Mammary epithelial cell (primary cell): ENCODE measurements at regions of chr14 and their contacts with region 1.

Region 1: GRCh38 chr14:103014466-103015319 is 42.7 kb downstream of the CDC42BPB start:
- DNase-seq: peak; percentile 57
- H3K4me3 ChIP-seq: no peak overlapping the region
- H3K27ac ChIP-seq: no peak overlapping the region
- H3K4me1 ChIP-seq: peaks cover 19% of the 10 kb centered on the region
- H3K27me3 ChIP-seq: no peaks in the 10 kb centered on the region
- CTCF ChIP-seq: no peak

Region 2: DNA sequence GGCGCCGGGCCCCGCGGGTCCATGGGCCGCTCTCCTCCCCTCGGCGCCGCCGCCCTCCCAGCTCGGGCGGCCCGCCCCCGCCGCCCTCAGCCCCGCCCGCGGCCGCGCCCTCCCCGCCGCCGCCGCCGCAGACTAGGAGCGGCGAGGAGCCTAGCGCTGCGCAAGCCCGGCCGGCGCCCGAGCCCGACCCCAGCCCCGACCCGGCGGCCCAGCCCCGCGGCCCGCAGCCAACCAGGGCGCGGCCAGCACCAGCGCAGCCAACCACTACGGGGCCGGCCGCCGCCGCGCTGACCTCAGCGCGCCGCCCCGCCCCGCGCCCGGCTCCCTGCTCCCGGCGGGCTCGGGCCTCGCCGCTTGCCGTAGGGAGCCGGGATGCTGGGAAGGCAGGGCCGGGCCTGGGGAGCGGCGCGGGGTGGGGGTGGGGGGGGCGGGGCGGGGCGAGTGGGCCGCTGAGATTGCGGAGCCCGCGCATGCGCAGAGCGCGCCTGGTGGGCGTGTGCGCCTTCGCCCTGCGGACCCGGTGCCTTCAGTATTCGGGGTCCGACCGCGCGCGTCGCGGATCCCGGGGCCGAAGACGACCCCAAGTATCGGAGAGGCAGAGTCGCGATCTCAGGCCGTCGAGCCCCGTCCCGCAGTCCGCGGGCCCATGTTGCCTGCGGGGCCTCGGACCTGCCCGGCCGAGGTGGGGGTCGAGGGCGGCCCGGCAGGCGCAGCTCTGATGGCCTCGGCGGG is 42.8 kb after region 1 on chr14 and contains the start of gene CDC42BPB:
- CTCF ChIA-PET with region 1: no interaction called
- dilution Hi-C with region 1: no loop called
- in situ Hi-C with region 1: no loop called
- intact Hi-C with region 1: loop called (anchors 2 kb)
- DNase-seq: peak; percentile 90
- H3K4me3 ChIP-seq: peak within 1 kb of the TSS; percentile 97 to 99 (median 99)
- H3K27ac ChIP-seq: peak within 1 kb of the TSS; percentile 54
- H3K4me1 ChIP-seq: peaks cover 17% of the 10 kb centered on the region
- H3K27me3 ChIP-seq: no peaks in the 10 kb centered on the region
- CTCF ChIP-seq: no peak
- total RNA-seq, gene CDC42BPB: 73.5 to 82.5 TPM